Gastrocnemius medialis (tissue), 4 donors: ENCODE measurements at regions of chr11 and their contacts with region 1.

Region 1: DNA sequence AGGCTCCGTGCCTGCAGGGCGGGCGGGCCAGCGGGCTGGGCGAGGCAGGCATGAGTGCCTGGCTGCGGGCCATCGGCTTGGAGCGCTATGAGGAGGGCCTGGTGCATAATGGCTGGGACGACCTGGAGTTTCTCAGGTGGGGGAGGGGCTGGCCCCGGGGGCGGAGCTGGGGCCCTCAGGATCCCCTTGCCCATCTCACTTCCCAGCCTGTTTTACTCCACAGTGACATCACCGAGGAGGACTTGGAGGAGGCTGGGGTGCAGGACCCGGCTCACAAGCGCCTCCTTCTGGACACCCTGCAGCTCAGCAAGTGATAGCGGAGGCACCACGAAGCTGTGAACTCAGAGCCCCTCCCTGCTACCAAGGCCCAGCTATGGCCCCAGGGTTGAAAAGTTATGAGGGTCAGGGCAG is 5.9 kb downstream of the PHOX2A start:
- DNase-seq: peak in 1 of 2 donors; percentile 27
- ATAC-seq: no peak
- H3K4me3 ChIP-seq: no peak overlapping the region
- H3K27ac ChIP-seq: no peak overlapping the region
- H3K4me1 ChIP-seq: peaks cover 10 to 22% of the 10 kb centered on the region in 2 donors
- H3K27me3 ChIP-seq: peaks cover 8 to 17% (median 15%) of the 10 kb centered on the region in 3 donors
- CTCF ChIP-seq: peak in 4 of 5 experiments; percentile 34 to 53 (median 50)
- POLR2A ChIP-seq: no peak

Region 2: DNA sequence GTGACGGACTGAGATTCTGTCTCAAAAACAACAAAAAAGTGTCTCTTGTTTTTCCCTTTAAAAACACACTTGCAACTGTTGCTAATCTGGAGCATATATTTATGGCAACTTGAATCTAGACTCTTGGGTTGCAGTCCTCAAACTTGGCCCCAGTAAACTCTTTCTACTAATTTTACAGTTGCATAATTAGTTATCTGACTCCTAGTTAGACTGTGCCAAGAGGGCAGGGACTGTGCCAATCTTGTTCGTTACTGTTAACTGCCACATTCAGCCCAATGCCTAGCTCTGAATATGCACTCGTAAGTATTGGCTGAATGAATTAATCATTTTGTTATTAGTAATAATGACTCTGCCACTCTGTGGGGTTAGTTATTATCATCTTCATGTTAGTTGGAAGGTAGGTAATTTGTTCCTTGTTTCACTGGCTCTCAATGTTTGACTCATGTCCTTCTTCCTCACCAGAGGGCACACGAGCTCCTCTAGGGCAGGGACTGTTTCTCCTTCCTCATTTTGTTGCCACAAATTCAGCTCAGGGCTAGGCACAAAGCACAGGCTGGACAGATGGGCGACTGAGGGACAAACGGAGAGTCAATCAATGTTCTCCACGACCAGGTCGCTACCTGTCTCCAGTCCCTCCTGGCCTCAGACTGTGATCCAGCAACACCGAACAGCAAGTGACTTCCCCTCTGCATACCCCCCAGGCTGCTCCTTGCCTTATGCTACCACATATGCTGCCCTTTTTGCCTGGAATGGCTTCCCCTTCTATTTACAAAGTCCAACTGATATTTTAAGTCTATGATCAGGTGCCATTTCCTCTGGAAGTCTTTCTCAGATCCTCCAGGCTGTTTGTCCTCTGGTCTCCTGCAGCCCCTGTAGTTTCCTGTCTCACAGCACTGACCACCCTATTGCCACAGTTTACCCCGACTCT is 187.3 kb after region 1 on chr11:
- in situ Hi-C with region 1: loop called in 1 of 4 experiments (anchors 10 kb)
- intact Hi-C with region 1: loop called (anchors 5 kb)
- DNase-seq: peak; percentile 46 to 63
- ATAC-seq: peak; percentile 93 to 94
- H3K4me3 ChIP-seq: no peak overlapping the region
- H3K27ac ChIP-seq: peak overlapping the region; percentile 42 to 74 (median 70)
- H3K4me1 ChIP-seq: peaks cover 43 to 47% of the 10 kb centered on the region in 2 donors
- H3K27me3 ChIP-seq: no peaks in the 10 kb centered on the region
- CTCF ChIP-seq: no peak
- POLR2A ChIP-seq: no peak